ENCODE measurements at regions of chr18 and their contacts with region 1.

Region 1: DNA sequence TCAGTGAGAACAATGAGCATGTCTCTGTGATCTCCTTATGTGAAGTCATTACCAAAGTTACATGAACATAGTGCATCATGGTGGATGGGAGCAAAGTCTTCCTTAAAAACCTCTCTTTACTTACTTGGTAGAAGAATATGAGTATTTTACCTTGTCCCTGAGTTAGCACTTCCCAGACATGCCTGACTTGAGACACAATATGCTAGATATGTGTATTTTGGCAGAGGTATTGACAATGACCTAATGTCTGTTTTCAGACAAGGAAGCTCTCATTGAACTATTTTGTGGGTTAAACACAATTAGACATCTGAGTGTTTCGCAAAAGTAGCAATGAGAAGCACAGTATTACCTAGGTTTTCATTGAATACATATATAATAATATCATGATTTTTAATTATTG is 99.1 kb upstream of the MC4R start:
- DNase-seq: no peak
- ATAC-seq: peak in 2 of 8 donors; percentile 25 to 63
- H3K4me3 ChIP-seq: no peak overlapping the region
- H3K27ac ChIP-seq: peak overlapping the region in 1 of 10 donors; percentile 11
- H3K4me1 ChIP-seq: no peaks in the 10 kb centered on the region
- H3K27me3 ChIP-seq: no peaks in the 10 kb centered on the region
- CTCF ChIP-seq: no peak

Region 2: DNA sequence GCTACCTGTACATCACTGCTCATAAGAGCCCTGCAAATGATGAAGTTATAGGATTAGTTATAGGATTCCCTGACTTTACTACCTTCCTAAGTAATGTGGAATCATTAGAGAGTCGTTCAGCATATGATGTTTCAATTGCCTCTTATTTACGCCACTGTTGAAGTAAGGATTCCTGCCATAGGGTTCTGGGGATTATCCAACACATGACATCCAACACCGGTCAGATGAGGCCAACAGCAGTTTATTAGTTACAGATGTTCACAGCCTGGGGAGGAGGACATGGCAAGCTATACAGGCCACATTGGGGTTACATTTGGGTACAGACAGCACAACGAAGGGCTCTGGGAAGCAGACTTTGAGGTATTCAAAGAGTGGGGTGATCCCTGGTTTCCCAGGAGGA is 35.0 kb after region 1 on chr18:
- intact Hi-C with region 1: no loop called
- DNase-seq: no peak
- ATAC-seq: no peak
- H3K4me3 ChIP-seq: no peak overlapping the region
- H3K27ac ChIP-seq: no peak overlapping the region
- H3K4me1 ChIP-seq: no peaks in the 10 kb centered on the region
- H3K27me3 ChIP-seq: no peaks in the 10 kb centered on the region
- CTCF ChIP-seq: no peak

Region 3: DNA sequence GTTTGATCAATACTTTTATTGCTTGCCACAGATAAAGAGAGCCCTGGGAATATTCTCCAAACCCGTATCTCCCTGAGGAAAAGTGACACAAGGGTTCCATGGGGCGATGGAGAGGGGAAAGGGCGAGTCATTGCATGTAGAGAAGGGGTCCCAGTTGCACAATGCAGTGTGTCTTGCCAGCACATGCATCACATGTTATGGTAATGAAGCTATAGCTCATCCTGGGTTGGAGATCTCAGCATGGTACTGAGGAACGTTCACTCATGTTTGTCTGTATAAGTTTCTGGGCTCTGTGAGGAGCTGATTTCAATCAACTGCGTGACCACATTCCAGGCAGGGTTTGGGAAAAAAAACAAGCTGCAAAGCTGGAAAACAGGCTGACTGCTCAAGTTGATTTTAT is 121.6 kb after region 1 on chr18:
- intact Hi-C with region 1: loop called in 1 of 10 experiments (anchors 5 kb)
- DNase-seq: no peak
- ATAC-seq: no peak
- H3K4me3 ChIP-seq: no peak overlapping the region
- H3K27ac ChIP-seq: no peak overlapping the region
- H3K4me1 ChIP-seq: no peaks in the 10 kb centered on the region
- H3K27me3 ChIP-seq: no peaks in the 10 kb centered on the region
- CTCF ChIP-seq: no peak

Region 4: GRCh38 chr18:60892850-60893249 is 421.2 kb after region 1 on chr18:
- intact Hi-C with region 1: no loop called
- DNase-seq: no peak
- ATAC-seq: no peak
- H3K4me3 ChIP-seq: no peak overlapping the region
- H3K27ac ChIP-seq: no peak overlapping the region
- H3K4me1 ChIP-seq: peaks cover 0 to 13% (median 0%) of the 10 kb centered on the region in 9 donors
- H3K27me3 ChIP-seq: no peaks in the 10 kb centered on the region
- CTCF ChIP-seq: no peak